Naive thymus-derived CD4-positive, alpha-beta T cell (primary cell): ENCODE measurements at regions of chr11 and their contacts with region 1.

Region 1: GRCh38 chr11:62726915-62727763 is at the start of gene HNRNPUL2:
- DNase-seq: peak; percentile 96 to 100 (median 99)
- ATAC-seq: peak; percentile 89
- H3K4me3 ChIP-seq: peak within 1 kb of the TSS; percentile 87
- H3K4me3 Mint-ChIP-seq: peak within 1 kb of the TSS; percentile 91 to 99 (median 96)
- H3K27ac ChIP-seq: peak within 1 kb of the TSS; percentile 92
- H3K27ac Mint-ChIP-seq: peak within 1 kb of the TSS; percentile 95 to 100 (median 98)
- H3K4me1 ChIP-seq: peaks cover 36 to 38% of the 10 kb centered on the region in 2 donors
- H3K4me1 Mint-ChIP-seq: peaks cover 23 to 65% (median 58%) of the 10 kb centered on the region in 7 donors
- H3K27me3 ChIP-seq: no peaks in the 10 kb centered on the region
- H3K27me3 Mint-ChIP-seq: peaks cover 0 to 2% (median 0%) of the 10 kb centered on the region in 5 donors
- total RNA-seq, gene HNRNPUL2: 43.4 to 77.5 (median 65.3) TPM

Region 2: GRCh38 chr11:62645956-62646824 is 80.9 kb before region 1 on chr11 and contains the start of gene GANAB:
- CTCF ChIA-PET with region 1: interaction called, 3 read pairs
- POLR2A ChIA-PET with region 1: interaction called, 7 read pairs
- intact Hi-C with region 1: loop called (anchors 1 kb)
- DNase-seq: peak; percentile 89 to 99 (median 97)
- ATAC-seq: peak; percentile 99
- H3K4me3 ChIP-seq: peak within 1 kb of the TSS; percentile 84
- H3K4me3 Mint-ChIP-seq: peak within 1 kb of the TSS; percentile 94 to 99 (median 98)
- H3K27ac ChIP-seq: peak within 1 kb of the TSS; percentile 97
- H3K27ac Mint-ChIP-seq: peak within 1 kb of the TSS; percentile 92 to 98 (median 96)
- H3K4me1 ChIP-seq: peaks cover 6 to 25% of the 10 kb centered on the region in 2 donors
- H3K4me1 Mint-ChIP-seq: peaks cover 6 to 44% (median 37%) of the 10 kb centered on the region in 7 donors
- H3K27me3 ChIP-seq: no peaks in the 10 kb centered on the region
- H3K27me3 Mint-ChIP-seq: no peaks in the 10 kb centered on the region
- total RNA-seq, gene GANAB: 203 to 313 (median 286) TPM

Region 3: DNA sequence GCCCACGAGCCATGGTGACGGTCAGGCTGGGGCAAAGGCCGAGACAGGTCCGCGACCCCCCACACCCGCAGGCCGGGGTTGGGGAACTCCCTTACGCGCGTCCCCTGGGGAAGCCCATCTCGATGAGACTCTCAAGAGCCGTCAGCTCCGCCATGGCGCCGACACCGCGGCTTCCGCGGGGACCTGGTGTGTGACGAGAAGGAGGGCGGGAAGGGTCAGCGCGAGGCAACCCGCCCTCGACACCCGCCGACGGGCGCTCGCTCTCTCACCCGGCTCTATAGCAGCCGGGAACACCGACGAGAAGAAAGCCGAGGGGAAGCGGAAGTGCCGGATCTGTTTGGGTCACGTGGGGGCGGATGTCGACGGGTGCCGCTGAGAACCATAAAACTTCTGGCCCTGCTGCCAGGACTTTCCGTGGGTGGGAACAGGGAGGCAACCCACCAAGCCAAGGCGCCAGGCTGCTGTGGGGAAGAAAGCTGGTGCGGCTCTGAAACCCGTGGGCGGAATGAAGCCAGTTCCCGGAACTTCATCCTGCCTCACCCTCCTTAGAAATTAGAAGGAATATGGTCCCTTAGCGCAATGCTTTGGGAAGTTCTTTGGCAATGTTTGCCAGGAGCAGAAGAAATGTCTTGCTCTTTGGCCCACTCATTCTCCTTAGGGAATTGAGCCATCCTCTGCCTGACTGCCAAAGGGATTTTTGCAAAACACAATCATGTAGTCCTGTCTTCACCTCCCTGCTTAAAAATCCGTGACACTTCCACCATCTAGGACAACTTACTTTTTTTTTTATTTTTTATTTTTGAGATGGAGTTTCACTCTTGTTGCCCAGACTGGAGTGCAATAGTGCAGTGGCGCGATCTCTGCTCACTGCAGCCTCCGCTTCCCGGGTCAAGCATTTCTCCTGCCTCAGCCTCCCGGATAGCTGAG is 48.1 kb before region 1 on chr11 and contains the start of gene UBXN1:
- CTCF ChIA-PET with region 1: no interaction called
- POLR2A ChIA-PET with region 1: interaction called, 31 read pairs
- intact Hi-C with region 1: loop called (anchors 1 to 2 kb)
- DNase-seq: peak; percentile 63 to 84 (median 81)
- ATAC-seq: peak; percentile 91
- H3K4me3 ChIP-seq: peak within 1 kb of the TSS; percentile 87
- H3K4me3 Mint-ChIP-seq: peak within 1 kb of the TSS; percentile 86 to 93 (median 90)
- H3K27ac ChIP-seq: peak within 1 kb of the TSS; percentile 98
- H3K27ac Mint-ChIP-seq: peak within 1 kb of the TSS; percentile 88 to 98 (median 94)
- H3K4me1 ChIP-seq: peaks cover 13 to 15% of the 10 kb centered on the region in 2 donors
- H3K4me1 Mint-ChIP-seq: peaks cover 19 to 41% (median 37%) of the 10 kb centered on the region in 7 donors
- H3K27me3 ChIP-seq: no peaks in the 10 kb centered on the region
- H3K27me3 Mint-ChIP-seq: no peaks in the 10 kb centered on the region
- total RNA-seq, gene UBXN1: 114 to 215 (median 207) TPM

Region 4: DNA sequence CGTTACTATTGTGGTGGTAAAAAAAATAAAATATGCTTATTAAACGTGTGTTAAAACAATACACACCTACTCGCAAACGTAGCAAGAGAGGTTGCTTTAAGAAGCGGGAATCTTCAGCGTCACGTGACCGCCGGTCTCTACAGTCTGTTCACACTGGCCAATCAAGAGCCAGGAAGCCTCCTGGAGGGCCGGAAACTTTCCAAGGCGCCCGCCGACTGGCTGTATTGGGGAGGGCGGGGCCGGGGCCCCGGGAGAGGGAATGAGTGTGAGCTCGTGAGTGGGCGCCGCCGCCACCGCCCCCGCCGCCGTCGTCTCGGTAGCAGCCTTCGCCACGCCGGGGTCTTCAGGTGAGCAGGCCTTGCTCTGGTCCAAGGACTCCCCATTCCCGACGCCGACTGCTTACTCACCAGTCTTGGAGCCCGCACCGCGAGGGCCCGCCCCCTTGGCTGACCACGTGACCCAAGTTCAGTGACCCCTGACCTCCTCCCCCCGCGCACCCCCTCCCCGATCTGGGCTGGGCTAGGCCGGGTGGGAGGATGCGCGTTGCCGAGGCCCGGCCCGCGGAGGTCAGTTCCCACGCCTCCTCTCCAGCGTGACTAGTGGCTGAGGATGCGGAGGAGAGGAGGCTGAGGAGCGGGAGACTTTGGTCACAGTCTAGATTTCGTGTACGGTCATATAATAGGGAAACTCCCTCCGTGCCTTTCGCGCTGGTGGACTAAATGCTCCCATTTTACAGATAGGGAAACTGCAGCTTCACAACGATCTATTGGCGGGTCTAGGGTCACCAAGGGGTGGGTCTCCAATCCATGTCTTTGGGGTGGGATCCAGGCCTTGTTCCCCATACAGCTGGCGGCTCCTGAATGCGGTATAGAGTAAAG is 44.2 kb after region 1 on chr11 and contains the start of gene TAF6L:
- CTCF ChIA-PET with region 1: interaction called, 4 read pairs
- POLR2A ChIA-PET with region 1: interaction called, 69 read pairs
- intact Hi-C with region 1: loop called (anchors 1 kb)
- DNase-seq: peak; percentile 80 to 98 (median 82)
- ATAC-seq: peak; percentile 92
- H3K4me3 ChIP-seq: peak within 1 kb of the TSS; percentile 66
- H3K4me3 Mint-ChIP-seq: peak within 1 kb of the TSS; percentile 88 to 98 (median 94)
- H3K27ac ChIP-seq: peak within 1 kb of the TSS; percentile 82
- H3K27ac Mint-ChIP-seq: peak within 1 kb of the TSS; percentile 89 to 97 (median 94)
- H3K4me1 ChIP-seq: peaks cover 10 to 13% of the 10 kb centered on the region in 2 donors
- H3K4me1 Mint-ChIP-seq: peaks cover 17 to 37% (median 27%) of the 10 kb centered on the region in 7 donors
- H3K27me3 ChIP-seq: no peaks in the 10 kb centered on the region
- H3K27me3 Mint-ChIP-seq: no peaks in the 10 kb centered on the region
- total RNA-seq, gene TAF6L: 13.1 to 34.9 (median 24.1) TPM

Region 5: DNA sequence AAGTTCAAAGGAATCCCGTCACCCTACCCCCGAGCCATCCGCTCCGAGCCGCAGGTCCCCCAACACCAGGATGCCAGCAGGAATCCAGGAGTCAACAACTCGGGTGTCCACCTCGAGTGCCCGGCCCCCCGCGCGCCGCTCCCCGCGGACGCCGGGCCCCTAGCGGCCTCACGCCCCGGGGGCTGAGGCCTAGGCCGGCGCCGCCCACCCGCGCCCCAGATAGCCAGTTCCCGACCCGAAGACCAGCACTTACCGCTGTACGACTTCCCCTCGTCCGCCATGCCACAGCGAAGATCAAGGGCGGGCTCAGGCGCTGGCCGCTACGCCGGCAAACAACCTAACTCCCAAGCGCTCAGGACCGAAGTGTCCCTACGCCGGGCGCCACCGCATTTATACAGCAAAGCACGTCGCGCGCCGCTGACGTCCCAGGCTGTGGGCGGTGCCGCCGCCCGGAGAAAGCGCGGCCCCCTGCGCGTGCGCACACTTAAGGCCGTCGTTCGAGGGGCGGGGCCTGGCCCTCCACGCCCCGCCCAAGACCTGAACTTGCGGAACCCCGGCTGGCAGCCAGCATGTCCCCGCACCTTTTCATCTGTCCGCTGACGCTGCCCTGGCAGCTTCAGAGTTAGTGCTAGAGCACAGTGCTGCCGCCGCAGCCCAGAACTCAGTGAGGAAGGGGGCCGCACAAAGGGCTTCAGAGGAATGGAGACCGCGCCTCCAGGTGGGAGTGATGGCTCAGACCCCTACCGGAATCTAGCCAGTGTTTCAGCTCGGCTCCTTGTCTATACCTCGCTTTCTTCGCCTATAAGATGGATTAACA is 78.1 kb after region 1 on chr11 and contains the start of gene NXF1:
- CTCF ChIA-PET with region 1: no interaction called
- POLR2A ChIA-PET with region 1: interaction called, 13 read pairs
- intact Hi-C with region 1: loop called (anchors 1 to 2 kb)
- DNase-seq: peak; percentile 91 to 99 (median 97)
- ATAC-seq: peak; percentile 92
- H3K4me3 ChIP-seq: peak within 1 kb of the TSS; percentile 87
- H3K4me3 Mint-ChIP-seq: peak within 1 kb of the TSS; percentile 90 to 100 (median 99)
- H3K27ac ChIP-seq: peak within 1 kb of the TSS; percentile 97
- H3K27ac Mint-ChIP-seq: peak within 1 kb of the TSS; percentile 95 to 100 (median 99)
- H3K4me1 ChIP-seq: peaks cover 13 to 18% of the 10 kb centered on the region in 2 donors
- H3K4me1 Mint-ChIP-seq: peaks cover 17 to 55% (median 34%) of the 10 kb centered on the region in 7 donors
- H3K27me3 ChIP-seq: no peaks in the 10 kb centered on the region
- H3K27me3 Mint-ChIP-seq: peaks cover 0 to 2% (median 0%) of the 10 kb centered on the region in 5 donors
- total RNA-seq, gene NXF1: 92.1 to 421 (median 195) TPM